ENCODE measurements at regions of chr18 and their contacts with region 1.

Region 1: DNA sequence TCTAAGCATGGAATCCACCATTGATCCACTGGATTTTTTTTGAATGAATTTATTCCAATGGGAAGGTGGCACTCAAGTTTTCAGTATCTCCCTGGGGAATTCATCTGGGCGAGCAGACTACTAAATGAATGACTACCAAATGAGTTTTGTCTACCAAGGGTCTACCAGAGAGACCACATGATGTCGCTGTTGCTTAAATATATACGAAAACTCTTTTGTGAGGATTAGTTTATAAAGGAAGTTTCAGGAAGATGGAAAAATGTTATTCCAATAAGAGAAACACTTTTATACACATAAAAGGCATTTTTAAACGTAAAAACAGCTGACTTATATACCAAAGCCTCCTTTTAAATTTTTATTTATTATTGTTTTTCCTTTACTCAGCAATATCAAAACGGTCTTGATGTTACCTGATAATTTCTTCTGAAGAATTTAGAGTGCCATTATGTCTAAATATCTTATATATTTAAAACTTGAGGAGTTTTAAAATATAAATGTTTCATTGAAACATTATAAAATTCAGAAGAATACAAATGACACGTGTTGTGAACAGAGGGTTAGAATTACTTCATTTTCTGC is 139.7 kb downstream of the HRH4 start:
- DNase-seq: peak in 1 of 2 donors; percentile 12
- ATAC-seq: peak; percentile 34

Region 2: DNA sequence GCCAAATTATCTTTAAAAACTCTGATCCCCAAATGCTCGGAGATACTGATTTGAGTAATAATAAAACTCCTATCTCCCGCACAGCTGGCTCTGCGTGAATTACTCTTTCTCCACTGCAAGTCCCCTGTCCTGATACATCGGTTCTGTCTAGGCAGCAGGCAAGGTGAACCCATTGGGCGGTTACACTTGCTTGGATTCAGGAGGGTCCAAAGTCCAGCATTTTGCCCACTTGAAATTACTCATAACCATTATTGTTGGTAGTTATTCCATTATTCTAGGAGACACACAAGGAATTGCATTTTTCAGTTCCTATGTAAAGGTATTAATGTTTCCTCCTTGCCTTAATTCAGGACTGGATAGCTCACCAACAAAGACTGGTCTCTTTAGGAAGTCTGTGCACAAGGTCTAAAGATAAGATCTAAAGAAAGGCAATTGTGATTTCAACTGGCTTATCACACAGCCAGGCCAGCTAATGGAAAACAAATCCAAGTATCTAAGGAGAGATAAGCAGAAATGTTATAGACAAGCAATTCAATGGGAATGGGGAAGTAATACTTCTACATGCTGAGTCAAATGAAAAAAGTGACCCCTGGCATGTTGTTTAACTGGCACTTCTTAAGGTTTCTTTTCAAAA is 990.7 kb before region 1 on chr18:
- intact Hi-C with region 1: no loop called
- DNase-seq: no peak
- ATAC-seq: peak; percentile 80

Region 3: DNA sequence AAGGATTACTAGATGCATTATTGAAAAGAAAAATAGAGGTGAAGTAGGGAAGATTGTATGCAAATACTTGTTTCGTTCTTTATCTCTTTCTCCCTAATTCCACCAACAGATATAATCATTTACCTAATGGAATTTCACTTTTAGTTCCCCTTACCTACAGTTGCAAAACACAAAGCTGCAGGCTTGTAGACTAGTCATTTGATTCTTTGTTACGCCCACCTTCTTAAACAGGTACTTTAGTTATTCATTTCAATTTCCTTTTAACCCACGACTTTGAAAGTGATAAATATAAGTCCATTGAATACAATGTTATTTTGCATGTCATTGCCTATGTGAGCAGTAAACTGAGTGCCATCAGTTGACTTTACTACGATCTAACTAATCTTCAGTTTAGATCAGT is 143.6 kb before region 1 on chr18:
- intact Hi-C with region 1: no loop called
- DNase-seq: no peak
- ATAC-seq: no peak

Region 4: DNA sequence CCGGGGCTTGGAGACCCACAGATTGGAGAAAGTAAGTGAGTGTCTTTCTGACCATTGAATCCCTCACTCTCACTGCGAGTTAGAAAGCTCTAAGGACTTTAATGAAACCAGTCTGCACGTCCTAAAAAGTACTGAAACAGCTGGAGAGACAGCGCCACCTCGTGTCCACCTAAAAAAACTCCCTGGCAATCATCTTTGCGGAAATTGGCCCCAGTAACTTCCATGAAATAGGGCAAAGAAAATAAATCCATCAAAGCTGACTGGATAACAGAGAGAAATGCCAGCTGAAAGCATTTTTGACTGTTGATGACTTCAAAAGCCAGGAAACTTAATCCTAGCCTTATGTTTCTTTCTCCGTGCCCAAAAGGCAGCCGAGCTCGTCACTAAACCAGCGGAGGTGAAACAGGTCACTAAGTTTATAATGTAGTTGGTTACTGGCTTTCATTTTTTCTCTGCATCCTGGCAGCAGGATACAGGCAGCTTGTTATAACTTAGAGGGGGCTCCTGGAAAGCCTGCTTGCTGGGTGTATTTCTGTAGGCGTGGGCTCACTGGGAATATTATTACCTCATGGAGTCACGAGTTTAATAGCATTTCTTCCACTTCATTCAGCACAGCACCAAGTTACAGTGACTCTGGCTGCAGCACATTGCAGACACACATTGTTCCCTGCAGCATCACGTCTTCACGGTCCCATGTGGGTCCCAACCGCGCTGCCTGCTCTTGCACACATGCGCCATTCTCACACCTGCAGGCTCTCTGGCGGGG is 126.7 kb after region 1 on chr18:
- intact Hi-C with region 1: loop called in 1 of 2 experiments (anchors 10 kb)
- DNase-seq: peak; percentile 50 to 68
- ATAC-seq: peak; percentile 67

Measured in left colon (tissue), 2 donors.